CD8-positive, alpha-beta T cell (primary cell): ENCODE measurements at regions of chr16 and their contacts with region 1.

Region 1: DNA sequence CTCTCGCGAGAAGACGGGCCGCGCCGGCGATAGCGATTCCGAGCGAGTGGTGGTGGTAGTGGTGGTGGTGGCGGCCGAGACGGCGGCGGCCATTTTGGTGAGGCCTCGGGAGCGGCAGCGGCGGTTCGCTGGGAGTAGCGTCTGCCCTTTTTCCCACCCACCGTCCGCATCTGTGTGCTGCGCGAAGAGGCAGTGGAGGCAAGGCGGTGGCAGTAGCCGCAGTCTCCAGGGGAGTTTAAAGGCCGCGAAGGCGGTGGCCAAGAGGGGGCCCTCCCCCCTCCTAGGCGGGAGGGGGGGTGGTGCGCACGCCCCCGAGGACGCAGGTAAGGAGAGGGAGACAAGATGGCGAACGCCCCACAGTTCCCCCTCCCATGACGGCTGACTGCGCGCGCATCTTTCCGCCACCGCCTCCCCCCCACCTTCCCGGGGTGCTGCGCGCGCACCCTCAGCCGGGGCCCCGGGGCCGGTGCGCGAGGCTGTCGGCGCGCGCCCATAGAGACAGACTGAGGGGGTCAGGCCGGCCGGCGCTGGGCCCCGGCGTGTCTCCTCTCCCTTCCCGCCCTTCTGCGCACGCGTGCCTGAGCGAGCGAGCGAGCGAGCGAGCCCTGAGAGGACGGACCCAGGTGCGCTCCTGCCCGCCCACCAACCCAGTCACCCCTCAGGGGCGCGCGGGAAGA is 694 bp upstream of the SRCAP start:
- DNase-seq: peak; percentile 96 to 99 (median 99)
- ATAC-seq: peak; percentile 74
- H3K4me3 ChIP-seq: peak overlapping the region; percentile 84 to 99
- H3K4me3 Mint-ChIP-seq: peak overlapping the region; percentile 97
- H3K27ac ChIP-seq: peak overlapping the region; percentile 98 to 100
- H3K27ac Mint-ChIP-seq: peak overlapping the region; percentile 100
- H3K4me1 ChIP-seq: peaks cover 24% of the 10 kb centered on the region
- H3K4me1 Mint-ChIP-seq: peaks cover 35% of the 10 kb centered on the region
- H3K27me3 ChIP-seq: no peaks in the 10 kb centered on the region
- H3K27me3 Mint-ChIP-seq: no peaks in the 10 kb centered on the region
- CTCF ChIP-seq: no peak

Region 2: DNA sequence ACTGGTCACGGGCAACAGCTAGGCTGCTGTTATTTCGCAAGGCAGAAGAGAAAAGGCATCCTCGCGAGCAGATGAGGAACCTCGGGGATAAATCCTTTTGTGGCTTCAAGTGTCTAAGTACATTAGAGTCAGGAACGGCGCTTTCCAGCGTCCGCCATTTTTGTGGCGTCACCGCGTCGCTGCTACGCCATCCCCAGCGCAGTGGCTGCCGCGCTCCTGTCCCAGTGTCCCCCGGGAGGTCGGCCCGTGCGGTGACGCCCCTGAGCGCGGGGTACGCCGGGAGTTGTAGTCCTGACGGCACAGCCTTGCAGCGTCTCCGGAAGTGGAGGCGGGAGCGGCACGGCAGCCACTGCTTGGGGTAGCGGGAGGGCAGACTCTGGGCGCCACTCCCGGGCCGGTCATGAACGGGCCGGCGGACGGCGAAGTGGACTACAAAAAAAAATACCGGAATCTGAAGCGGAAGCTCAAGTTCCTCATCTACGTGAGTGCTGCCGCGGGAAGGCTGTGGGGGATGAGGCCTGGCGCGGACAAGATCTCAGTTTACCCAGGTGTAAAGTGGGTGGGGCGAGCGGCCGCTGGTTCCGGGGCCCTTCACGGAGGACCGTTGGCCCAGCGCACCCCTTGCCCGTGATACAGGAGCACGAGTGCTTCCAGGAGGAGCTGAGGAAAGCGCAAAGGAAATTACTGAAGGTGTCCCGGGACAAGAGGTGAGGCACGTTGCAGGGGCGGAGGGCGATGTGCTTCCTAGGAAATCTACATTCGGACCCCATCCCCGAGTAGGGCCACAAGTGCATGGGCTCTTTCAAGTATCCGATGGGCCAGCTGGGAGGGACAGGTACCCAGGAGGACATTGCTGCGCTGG is 702.1 kb before region 1 on chr16 and contains the start of gene INO80E:
- CTCF ChIA-PET with region 1: no interaction called
- POLR2A ChIA-PET with region 1: no interaction called
- intact Hi-C with region 1: loop called in 1 of 2 experiments (anchors 5 kb)
- DNase-seq: peak; percentile 98 to 100 (median 99)
- ATAC-seq: peak; percentile 96
- H3K4me3 ChIP-seq: peak within 1 kb of the TSS; percentile 93 to 100
- H3K4me3 Mint-ChIP-seq: peak within 1 kb of the TSS; percentile 94
- H3K27ac ChIP-seq: peak within 1 kb of the TSS; percentile 99
- H3K27ac Mint-ChIP-seq: peak within 1 kb of the TSS; percentile 97
- H3K4me1 ChIP-seq: peaks cover 14% of the 10 kb centered on the region
- H3K4me1 Mint-ChIP-seq: peaks cover 39% of the 10 kb centered on the region
- H3K27me3 ChIP-seq: no peaks in the 10 kb centered on the region
- H3K27me3 Mint-ChIP-seq: no peaks in the 10 kb centered on the region
- CTCF ChIP-seq: no peak
- total RNA-seq, gene INO80E: 49.8 to 59.4 TPM

Region 3: GRCh38 chr16:30429678-30430427 is 268.4 kb before region 1 on chr16 and contains the start of gene DCTPP1:
- CTCF ChIA-PET with region 1: no interaction called
- POLR2A ChIA-PET with region 1: no interaction called
- intact Hi-C with region 1: loop called in 1 of 2 experiments (anchors 1 kb)
- DNase-seq: peak; percentile 89 to 100 (median 95)
- ATAC-seq: peak; percentile 96
- H3K4me3 ChIP-seq: peak within 1 kb of the TSS; percentile 62 to 71
- H3K4me3 Mint-ChIP-seq: no peak within 1 kb of the TSS
- H3K27ac ChIP-seq: peak within 1 kb of the TSS; percentile 60 to 72
- H3K27ac Mint-ChIP-seq: no peak within 1 kb of the TSS
- H3K4me1 ChIP-seq: peaks cover 18% of the 10 kb centered on the region
- H3K4me1 Mint-ChIP-seq: peaks cover 19% of the 10 kb centered on the region
- H3K27me3 ChIP-seq: no peaks in the 10 kb centered on the region
- H3K27me3 Mint-ChIP-seq: no peaks in the 10 kb centered on the region
- CTCF ChIP-seq: peak; percentile 63
- total RNA-seq, gene DCTPP1: 4.0 to 5.5 TPM

Region 4: DNA sequence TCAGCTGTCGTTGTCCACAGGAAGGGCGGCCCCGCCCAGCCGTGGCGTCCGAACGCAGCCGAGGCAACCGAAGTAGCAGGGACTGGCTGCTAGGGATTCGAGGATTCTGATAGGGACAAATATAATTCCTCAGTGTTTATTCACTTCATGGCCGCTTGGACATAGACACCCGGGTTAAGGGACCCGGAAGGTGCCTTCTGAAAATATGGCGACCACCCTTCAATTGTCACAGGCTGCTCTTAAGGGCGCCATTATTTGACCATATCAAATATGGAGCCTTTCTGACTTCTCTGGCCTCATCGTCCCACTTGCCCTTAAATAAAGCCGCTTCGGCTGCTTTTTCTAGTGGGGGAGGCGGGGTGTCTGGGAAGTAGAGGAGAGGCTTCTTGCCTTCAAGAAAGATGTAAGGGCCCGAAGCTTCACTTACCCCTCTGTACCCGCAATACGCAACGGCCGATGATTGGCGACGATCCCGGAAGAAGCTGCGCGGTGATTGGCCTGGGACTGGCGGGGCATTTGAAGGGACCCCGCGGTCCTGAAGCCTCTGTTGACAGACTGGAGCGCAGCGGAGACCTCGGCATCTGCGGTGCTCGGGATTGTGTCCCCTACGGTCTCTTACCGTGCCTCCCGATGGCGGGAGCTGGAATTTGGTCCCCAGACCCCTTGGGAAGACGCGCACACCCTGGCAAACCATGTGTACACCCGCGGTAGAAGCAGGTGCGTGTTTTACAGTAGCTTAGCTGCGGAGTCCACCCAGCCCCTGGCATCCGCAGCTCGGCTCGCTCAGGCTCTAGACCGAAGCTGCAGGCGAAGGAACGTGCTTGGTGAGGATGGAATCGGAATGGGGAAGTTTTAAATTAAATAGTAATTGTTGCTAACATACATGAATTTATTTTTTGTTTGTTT is 126.3 kb before region 1 on chr16 and contains the start of gene ZNF688:
- CTCF ChIA-PET with region 1: interaction called, 4 read pairs
- POLR2A ChIA-PET with region 1: interaction called, 3 read pairs
- intact Hi-C with region 1: loop called (anchors 1 kb)
- DNase-seq: peak; percentile 89 to 99 (median 94)
- ATAC-seq: peak; percentile 81
- H3K4me3 ChIP-seq: peak within 1 kb of the TSS; percentile 85 to 86
- H3K4me3 Mint-ChIP-seq: peak within 1 kb of the TSS; percentile 90
- H3K27ac ChIP-seq: peak within 1 kb of the TSS; percentile 84 to 94
- H3K27ac Mint-ChIP-seq: peak within 1 kb of the TSS; percentile 98
- H3K4me1 ChIP-seq: peaks cover 40% of the 10 kb centered on the region
- H3K4me1 Mint-ChIP-seq: peaks cover 34% of the 10 kb centered on the region
- H3K27me3 ChIP-seq: no peaks in the 10 kb centered on the region
- H3K27me3 Mint-ChIP-seq: no peaks in the 10 kb centered on the region
- CTCF ChIP-seq: no peak
- total RNA-seq, gene ZNF688: 6.1 to 7.1 TPM

Region 5: DNA sequence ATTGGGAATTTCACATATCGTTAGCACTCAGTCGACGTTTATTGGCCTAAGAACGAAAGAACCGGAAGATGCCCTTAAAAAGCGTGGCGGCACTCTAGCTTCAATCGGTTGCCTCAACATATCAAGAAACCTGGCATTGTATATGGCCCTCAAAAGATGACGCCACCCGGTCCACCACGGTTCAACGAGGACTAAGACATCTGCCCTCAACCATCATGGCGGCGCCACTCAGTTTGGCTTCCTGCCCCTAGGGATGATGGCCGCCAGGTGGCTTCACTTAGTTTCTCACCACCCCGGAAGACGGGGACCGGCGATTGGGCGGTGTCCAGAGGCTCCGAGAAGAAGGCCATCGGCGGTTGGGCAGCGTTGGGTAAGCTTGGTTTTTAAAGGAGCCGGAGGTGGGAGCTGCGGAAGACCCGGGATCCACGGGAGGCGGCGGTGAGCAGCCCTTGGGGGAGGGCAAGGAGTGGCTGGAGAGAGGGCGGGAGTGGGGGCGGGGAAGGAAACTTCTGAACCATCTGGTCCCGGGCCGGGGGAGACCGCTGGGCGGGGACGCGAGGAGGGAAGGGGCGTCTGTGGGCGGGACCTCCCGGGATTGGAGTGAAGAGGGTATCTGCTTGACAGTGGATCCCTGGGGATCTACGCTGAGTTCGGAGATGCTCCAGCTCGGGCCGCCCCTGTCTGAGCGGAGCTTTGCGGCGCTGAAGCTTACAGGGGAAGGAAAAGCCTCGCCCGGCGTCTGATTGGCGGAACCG is 47.7 kb before region 1 on chr16 and contains the start of gene PRR14:
- CTCF ChIA-PET with region 1: interaction called, 73 read pairs
- POLR2A ChIA-PET with region 1: interaction called, 8 read pairs
- intact Hi-C with region 1: loop called (anchors 1 kb)
- DNase-seq: peak; percentile 96 to 100 (median 98)
- ATAC-seq: peak; percentile 85
- H3K4me3 ChIP-seq: peak within 1 kb of the TSS; percentile 92 to 100
- H3K4me3 Mint-ChIP-seq: peak within 1 kb of the TSS; percentile 99
- H3K27ac ChIP-seq: peak within 1 kb of the TSS; percentile 86 to 94
- H3K27ac Mint-ChIP-seq: peak within 1 kb of the TSS; percentile 98
- H3K4me1 ChIP-seq: peaks cover 20% of the 10 kb centered on the region
- H3K4me1 Mint-ChIP-seq: peaks cover 22% of the 10 kb centered on the region
- H3K27me3 ChIP-seq: no peaks in the 10 kb centered on the region
- H3K27me3 Mint-ChIP-seq: no peaks in the 10 kb centered on the region
- CTCF ChIP-seq: no peak
- total RNA-seq, gene PRR14: 48.4 to 51.0 TPM

Region 6: DNA sequence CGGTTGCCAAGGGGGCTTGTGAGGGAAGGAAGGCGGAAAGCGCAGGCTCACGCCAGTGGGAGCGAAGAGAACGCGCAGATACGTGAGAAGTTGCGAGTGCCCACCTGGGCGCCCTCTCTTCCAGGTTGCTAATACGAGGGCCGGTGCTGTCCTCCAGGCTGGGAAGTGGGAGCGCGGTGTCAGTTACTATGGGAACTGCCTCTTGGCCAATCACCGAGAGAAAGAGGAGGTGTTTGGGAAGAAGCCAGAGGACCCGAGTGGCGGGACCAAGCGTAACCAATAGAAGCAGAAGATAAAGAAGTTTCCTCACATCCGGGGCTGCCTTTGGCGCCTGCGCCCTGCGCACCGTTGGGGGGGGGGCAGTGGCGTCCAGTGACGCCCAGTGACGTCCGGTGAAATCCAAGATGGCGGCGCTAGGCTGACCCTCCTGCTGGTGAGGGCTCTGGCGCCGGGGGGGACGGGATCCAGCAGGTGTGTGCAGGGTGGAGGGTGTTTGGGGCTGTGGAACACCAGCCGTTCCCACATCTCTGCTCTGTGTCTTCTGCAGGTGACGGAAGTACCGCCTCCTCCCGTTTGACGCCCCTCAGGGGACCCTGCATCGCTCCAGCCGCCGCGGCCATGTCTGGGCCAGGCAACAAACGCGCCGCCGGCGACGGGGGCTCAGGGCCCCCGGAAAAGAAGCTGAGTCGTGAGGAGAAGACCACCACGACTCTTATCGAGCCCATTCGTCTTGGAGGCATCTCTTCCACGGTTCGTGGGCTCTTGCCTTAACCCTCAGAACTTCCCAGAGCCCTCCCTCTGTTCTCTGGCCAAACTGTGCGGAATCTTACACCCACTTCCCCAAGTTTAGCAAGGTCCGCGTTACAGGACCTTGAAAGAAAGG is 63.9 kb after region 1 on chr16 and contains the starts of genes CFAP119 and RNF40:
- CTCF ChIA-PET with region 1: no interaction called
- POLR2A ChIA-PET with region 1: no interaction called
- intact Hi-C with region 1: loop called (anchors 1 kb)
- DNase-seq: peak; percentile 67 to 96 (median 90)
- ATAC-seq: peak; percentile 91
- H3K4me3 ChIP-seq: peak within 1 kb of the TSS; percentile 59 to 95
- H3K4me3 Mint-ChIP-seq: peak within 1 kb of the TSS; percentile 96
- H3K27ac ChIP-seq: peak within 1 kb of the TSS; percentile 74 to 93
- H3K27ac Mint-ChIP-seq: peak within 1 kb of the TSS; percentile 92
- H3K4me1 ChIP-seq: peaks cover 24% of the 10 kb centered on the region
- H3K4me1 Mint-ChIP-seq: peaks cover 26% of the 10 kb centered on the region
- H3K27me3 ChIP-seq: no peaks in the 10 kb centered on the region
- H3K27me3 Mint-ChIP-seq: no peaks in the 10 kb centered on the region
- CTCF ChIP-seq: no peak
- total RNA-seq, gene CFAP119: 2.7 to 3.6 TPM
- total RNA-seq, gene RNF40: 98.7 to 101 TPM

Region 7: DNA sequence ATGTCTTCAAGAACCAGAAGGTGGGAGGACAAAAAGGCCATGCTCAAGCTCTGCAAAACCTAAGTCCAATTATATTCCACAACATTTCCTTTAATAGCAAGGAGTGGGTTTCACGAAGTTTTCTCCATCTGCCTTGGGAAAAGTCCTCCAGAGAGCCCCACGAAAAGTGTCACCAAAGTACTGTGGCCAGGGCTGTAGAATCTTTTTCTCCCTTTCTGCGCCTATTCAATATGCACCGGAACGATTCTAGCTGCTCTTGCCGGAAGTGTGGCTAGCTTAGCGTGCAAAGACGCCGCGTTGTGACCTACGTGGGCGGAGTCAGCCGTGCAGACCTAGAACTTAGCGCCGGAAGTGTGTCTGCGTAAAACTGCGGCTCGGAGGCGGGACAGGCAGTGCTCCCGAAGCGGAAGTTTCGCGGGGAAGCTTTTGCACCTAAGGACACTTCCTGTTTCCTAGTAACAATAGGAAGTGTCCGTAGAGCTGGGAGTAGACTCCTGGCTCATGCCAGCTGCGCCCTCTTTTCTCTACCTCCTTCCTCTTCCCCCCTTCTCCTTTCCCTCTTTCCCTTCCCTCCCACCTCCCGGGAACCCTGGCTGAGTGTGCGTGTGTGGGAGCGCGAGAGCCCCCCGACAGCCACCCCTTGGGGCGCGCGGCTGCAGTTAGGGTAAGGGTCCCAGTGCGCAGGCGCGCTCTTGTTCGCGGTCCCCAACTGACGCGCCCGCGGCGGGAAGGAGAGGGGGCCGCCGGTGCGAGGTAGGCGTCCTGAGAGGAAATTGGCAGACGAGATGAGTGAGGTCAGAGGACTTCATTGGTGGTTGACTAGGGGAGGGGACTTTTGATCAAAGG is 375.9 kb after region 1 on chr16 and contains the starts of genes ZNF646 and ZNF668:
- CTCF ChIA-PET with region 1: no interaction called
- POLR2A ChIA-PET with region 1: no interaction called
- intact Hi-C with region 1: loop called in 1 of 2 experiments (anchors 2 kb)
- DNase-seq: peak; percentile 94 to 100 (median 97)
- ATAC-seq: peak; percentile 82
- H3K4me3 ChIP-seq: peak within 1 kb of the TSS; percentile 67 to 83
- H3K4me3 Mint-ChIP-seq: peak within 1 kb of the TSS; percentile 96
- H3K27ac ChIP-seq: peak within 1 kb of the TSS; percentile 88 to 95
- H3K27ac Mint-ChIP-seq: peak within 1 kb of the TSS; percentile 97
- H3K4me1 ChIP-seq: peaks cover 27% of the 10 kb centered on the region
- H3K4me1 Mint-ChIP-seq: peaks cover 40% of the 10 kb centered on the region
- H3K27me3 ChIP-seq: no peaks in the 10 kb centered on the region
- H3K27me3 Mint-ChIP-seq: no peaks in the 10 kb centered on the region
- CTCF ChIP-seq: no peak
- total RNA-seq, gene ZNF646: 16.6 to 18.7 TPM
- total RNA-seq, gene ZNF668: 10.1 to 11.1 TPM